ENCODE measurements at regions of chr11 and their contacts with region 1.

Region 1: GRCh38 chr11:14907411-14908213 is 15.6 kb upstream of the CYP2R1 start:
- DNase-seq: peak; percentile 74 to 80
- H3K4me3 ChIP-seq: no peak overlapping the region
- H3K4me3 Mint-ChIP-seq: peak overlapping the region; percentile 67
- H3K27ac Mint-ChIP-seq: no peak overlapping the region
- H3K4me1 ChIP-seq: peaks cover 6% of the 10 kb centered on the region; the same call in 1 of the 2 replicates
- H3K4me1 Mint-ChIP-seq: peaks cover 12% of the 10 kb centered on the region
- H3K27me3 ChIP-seq: no peaks in the 10 kb centered on the region
- H3K27me3 Mint-ChIP-seq: no peaks in the 10 kb centered on the region
- CTCF ChIP-seq: peak; percentile 68 to 79

Region 2: DNA sequence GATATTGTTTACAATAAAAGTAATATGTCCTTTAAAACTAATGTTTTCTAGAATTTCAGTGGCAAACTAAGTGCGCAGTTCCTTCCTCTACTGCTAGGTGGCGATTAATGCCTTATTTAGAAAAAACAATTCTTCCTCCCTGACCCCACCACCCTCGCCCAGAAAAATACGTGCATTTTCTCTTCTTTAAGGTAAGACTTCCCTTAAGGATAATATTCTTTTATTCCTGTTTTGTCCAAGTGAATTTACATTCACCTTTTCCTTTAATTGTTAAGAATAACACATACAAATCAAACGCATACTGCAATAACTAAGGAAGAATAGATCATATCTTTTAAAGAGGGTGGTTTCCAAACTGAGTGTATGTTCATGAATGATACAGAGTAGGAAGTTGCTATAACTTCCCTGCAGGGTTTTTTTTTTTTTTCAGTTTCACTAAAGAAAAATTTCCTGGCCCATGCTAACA is 370.4 kb before region 1 on chr11:
- CTCF ChIA-PET with region 1: no interaction called
- POLR2A ChIA-PET with region 1: interaction called, 3 read pairs
- intact Hi-C with region 1: loop called (anchors 1 kb)
- DNase-seq: peak in 1 of 2 experiments; percentile 47
- H3K4me3 ChIP-seq: no peak overlapping the region
- H3K4me3 Mint-ChIP-seq: no peak overlapping the region
- H3K27ac Mint-ChIP-seq: no peak overlapping the region
- H3K4me1 ChIP-seq: no peaks in the 10 kb centered on the region
- H3K4me1 Mint-ChIP-seq: no peaks in the 10 kb centered on the region
- H3K27me3 ChIP-seq: no peaks in the 10 kb centered on the region
- H3K27me3 Mint-ChIP-seq: no peaks in the 10 kb centered on the region
- CTCF ChIP-seq: peak; percentile 66 to 79

Region 3: DNA sequence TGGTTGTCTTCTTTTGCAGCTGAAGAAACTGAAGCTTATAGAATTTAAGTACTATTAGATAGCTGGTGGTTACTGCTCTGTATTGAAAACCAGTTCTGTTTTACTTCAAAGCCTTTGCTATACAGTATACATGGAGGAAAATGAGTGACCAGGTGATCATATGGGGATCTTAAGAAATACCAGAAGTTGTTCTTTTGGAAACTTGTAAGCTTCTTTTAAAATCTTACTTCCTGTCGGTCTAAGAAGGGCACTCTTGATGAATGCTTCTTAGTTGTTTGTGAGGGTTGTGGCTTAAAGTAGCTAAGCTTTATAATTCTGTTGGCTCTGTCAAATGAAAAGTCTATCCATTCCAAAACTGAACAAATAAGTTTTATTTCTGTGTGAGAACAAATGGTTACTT is 208.8 kb before region 1 on chr11:
- CTCF ChIA-PET with region 1: no interaction called
- POLR2A ChIA-PET with region 1: no interaction called
- intact Hi-C with region 1: no loop called
- DNase-seq: no peak
- H3K4me3 ChIP-seq: no peak overlapping the region
- H3K4me3 Mint-ChIP-seq: no peak overlapping the region
- H3K27ac Mint-ChIP-seq: no peak overlapping the region
- H3K4me1 ChIP-seq: no peaks in the 10 kb centered on the region
- H3K4me1 Mint-ChIP-seq: no peaks in the 10 kb centered on the region
- H3K27me3 ChIP-seq: no peaks in the 10 kb centered on the region
- H3K27me3 Mint-ChIP-seq: no peaks in the 10 kb centered on the region
- CTCF ChIP-seq: no peak

Region 4: DNA sequence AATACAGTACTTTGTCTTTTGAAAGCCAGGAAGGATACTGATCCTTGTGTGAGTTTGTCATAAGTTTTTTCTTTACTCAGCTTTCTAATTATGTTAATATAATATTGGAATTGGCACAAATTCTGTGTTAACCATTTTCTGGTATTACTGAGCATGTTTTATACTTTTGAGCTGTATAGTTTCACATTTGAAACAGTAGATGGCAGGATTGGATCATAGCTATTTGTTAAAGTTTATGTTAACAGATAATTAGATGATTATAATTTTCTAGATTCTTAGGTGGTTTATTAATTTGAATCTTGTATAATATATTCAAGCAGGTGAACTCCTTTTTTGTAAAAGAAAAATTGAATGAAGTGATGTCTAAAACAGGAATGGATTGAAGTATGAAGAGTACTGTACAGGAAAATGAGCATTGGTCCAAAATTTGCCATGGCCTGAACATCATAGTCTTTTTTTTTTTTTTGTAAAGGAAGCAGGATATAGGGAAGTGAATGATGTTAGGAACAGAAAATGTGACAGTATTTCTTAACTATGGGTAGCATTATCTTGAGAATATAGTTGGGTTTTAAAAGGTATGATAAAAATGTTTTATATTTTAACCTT is 117.6 kb before region 1 on chr11:
- CTCF ChIA-PET with region 1: interaction called, 156 read pairs
- POLR2A ChIA-PET with region 1: no interaction called
- intact Hi-C with region 1: loop called (anchors 1 kb)
- DNase-seq: peak in 1 of 2 experiments; percentile 4
- H3K4me3 ChIP-seq: no peak overlapping the region
- H3K4me3 Mint-ChIP-seq: no peak overlapping the region
- H3K27ac Mint-ChIP-seq: no peak overlapping the region
- H3K4me1 ChIP-seq: no peaks in the 10 kb centered on the region
- H3K4me1 Mint-ChIP-seq: peaks cover 7% of the 10 kb centered on the region
- H3K27me3 ChIP-seq: no peaks in the 10 kb centered on the region
- H3K27me3 Mint-ChIP-seq: no peaks in the 10 kb centered on the region
- CTCF ChIP-seq: peak in 1 of 2 experiments; percentile 29

Region 5: GRCh38 chr11:14974515-14975251 is 67.1 kb after region 1 on chr11:
- CTCF ChIA-PET with region 1: interaction called, 20 read pairs
- POLR2A ChIA-PET with region 1: no interaction called
- intact Hi-C with region 1: loop called (anchors 2 kb)
- DNase-seq: peak; percentile 58 to 65
- H3K4me3 ChIP-seq: no peak overlapping the region
- H3K4me3 Mint-ChIP-seq: peak overlapping the region; percentile 62
- H3K27ac Mint-ChIP-seq: no peak overlapping the region
- H3K4me1 ChIP-seq: no peaks in the 10 kb centered on the region
- H3K4me1 Mint-ChIP-seq: no peaks in the 10 kb centered on the region
- H3K27me3 ChIP-seq: peaks cover 1% of the 10 kb centered on the region
- H3K27me3 Mint-ChIP-seq: peaks cover 22% of the 10 kb centered on the region
- CTCF ChIP-seq: peak; percentile 67 to 77

Region 6: DNA sequence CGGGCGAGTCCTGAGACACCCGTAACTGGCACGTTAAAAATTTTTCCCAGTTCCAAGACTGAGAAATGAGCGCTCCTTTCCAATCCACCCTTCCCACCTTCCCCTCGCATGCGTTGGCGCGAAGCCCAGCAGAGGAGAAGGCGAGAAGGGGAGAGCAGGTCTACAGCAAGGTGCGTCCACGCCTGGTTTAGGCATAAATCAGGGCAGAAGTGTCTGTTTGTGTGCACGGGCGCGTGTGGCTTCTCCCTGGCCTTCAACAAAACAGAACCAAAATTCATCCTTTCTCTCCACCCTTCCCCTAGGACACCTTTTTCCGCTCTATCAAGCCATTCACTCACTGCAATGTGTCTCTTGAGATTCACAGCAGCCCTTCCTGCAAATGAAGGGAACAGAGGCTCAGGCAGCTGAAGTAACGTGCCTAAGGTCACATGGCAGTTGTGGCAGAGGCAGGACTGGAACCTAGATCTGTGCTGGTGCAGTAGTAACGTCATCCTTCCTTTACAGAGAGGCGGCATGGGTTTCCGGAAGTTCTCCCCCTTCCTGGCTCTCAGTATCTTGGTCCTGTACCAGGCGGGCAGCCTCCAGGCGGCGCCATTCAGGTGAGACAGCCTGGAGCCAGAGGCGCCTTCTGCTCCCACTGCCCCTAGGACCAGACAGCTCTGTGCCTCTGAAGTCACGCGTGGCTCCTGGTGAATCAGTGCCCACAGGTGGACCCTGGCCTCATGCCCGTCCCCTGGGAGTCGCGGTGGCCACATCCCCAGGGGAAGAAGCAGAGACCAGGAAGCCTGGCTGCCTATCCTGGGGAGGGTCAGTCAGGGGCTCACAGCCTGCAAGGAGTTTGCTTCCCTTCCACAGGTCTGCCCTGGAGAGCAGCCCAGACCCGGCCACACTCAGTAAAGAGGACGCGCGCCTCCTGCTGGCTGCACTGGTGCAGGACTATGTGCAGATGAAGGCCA is 166.9 kb after region 1 on chr11:
- CTCF ChIA-PET with region 1: interaction called, 56 read pairs
- POLR2A ChIA-PET with region 1: no interaction called
- intact Hi-C with region 1: loop called (anchors 1 kb)
- DNase-seq: peak; percentile 83 to 86
- H3K4me3 ChIP-seq: no peak overlapping the region
- H3K4me3 Mint-ChIP-seq: peak overlapping the region; percentile 67
- H3K27ac Mint-ChIP-seq: no peak overlapping the region
- H3K4me1 ChIP-seq: no peaks in the 10 kb centered on the region
- H3K4me1 Mint-ChIP-seq: no peaks in the 10 kb centered on the region
- H3K27me3 ChIP-seq: peaks cover 1% of the 10 kb centered on the region; the same call in 1 of the 2 replicates
- H3K27me3 Mint-ChIP-seq: peaks cover 15% of the 10 kb centered on the region
- CTCF ChIP-seq: peak; percentile 82 to 86

Region 7: DNA sequence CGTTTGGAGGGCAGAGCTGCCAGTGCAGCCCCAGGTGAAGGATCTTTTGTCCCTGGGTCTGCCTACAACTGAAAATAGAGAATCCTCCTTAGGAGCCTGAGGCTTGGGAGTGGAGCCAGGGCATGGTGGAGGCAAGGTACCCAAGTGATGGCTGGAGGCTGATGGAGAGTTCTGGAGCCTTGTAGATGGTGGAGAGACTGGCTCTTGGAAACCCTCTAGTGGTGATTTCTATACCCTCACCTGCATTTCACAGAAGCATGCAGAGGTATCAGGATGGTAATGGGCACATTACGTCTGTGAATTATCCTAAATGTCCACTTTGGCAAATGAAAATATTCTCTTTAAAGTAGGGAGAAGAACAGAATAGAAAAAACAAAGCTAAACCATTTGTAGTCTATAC is 251.5 kb after region 1 on chr11:
- CTCF ChIA-PET with region 1: no interaction called
- POLR2A ChIA-PET with region 1: no interaction called
- intact Hi-C with region 1: loop called (anchors 1 kb)
- DNase-seq: peak in 1 of 2 experiments; percentile 21
- H3K4me3 ChIP-seq: no peak overlapping the region
- H3K4me3 Mint-ChIP-seq: no peak overlapping the region
- H3K27ac Mint-ChIP-seq: no peak overlapping the region
- H3K4me1 ChIP-seq: no peaks in the 10 kb centered on the region
- H3K4me1 Mint-ChIP-seq: peaks cover 7% of the 10 kb centered on the region
- H3K27me3 ChIP-seq: no peaks in the 10 kb centered on the region
- H3K27me3 Mint-ChIP-seq: peaks cover 8% of the 10 kb centered on the region
- CTCF ChIP-seq: peak; percentile 49 to 52

Region 8: DNA sequence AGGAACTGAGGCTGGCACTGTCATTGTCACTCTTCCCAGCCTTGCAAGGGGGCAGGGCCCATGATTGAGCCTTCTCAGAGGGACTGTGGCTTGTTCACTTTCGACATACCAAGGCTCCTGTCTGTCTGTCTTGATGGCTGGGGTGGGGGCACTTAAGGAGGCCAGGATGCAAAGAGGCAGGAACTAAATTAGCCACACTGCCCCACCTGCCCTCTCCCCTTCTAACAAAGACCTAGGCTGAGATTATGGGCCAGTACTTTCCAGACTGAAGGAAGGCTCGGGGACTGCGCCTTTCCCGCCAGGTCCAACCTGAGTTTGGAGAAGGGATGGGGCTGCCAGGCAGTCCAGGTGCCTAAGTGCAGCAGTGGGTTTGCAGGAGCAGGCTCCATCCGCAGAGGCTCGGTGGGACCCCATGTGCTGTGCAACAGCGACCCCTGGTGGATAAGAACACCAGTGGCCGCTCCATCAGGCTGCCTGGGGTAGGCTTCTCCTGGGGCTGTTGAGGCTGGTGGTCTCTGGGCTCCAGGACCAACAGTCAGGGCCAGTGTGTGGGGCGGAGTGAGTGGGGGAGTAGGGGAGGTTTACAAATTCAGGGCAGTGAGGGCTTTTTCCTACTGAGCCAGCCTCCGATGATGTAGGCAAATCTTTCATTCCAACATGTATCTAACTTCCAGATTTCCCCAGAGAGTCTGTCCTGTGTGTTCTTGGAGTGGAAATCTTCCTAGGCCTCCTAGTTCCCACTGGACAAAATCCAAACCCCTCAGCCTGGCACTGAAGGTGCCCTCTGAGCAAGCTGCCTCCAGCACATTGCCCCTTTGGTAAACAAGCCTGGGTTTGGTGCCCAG is 301.0 kb after region 1 on chr11:
- CTCF ChIA-PET with region 1: interaction called, 7 read pairs
- POLR2A ChIA-PET with region 1: no interaction called
- intact Hi-C with region 1: loop called (anchors 1 kb)
- DNase-seq: peak; percentile 71 to 87
- H3K4me3 ChIP-seq: no peak overlapping the region
- H3K4me3 Mint-ChIP-seq: no peak overlapping the region
- H3K27ac Mint-ChIP-seq: no peak overlapping the region
- H3K4me1 ChIP-seq: no peaks in the 10 kb centered on the region
- H3K4me1 Mint-ChIP-seq: peaks cover 3% of the 10 kb centered on the region
- H3K27me3 ChIP-seq: no peaks in the 10 kb centered on the region
- H3K27me3 Mint-ChIP-seq: peaks cover 7% of the 10 kb centered on the region
- CTCF ChIP-seq: peak; percentile 92 to 96

Region 9: DNA sequence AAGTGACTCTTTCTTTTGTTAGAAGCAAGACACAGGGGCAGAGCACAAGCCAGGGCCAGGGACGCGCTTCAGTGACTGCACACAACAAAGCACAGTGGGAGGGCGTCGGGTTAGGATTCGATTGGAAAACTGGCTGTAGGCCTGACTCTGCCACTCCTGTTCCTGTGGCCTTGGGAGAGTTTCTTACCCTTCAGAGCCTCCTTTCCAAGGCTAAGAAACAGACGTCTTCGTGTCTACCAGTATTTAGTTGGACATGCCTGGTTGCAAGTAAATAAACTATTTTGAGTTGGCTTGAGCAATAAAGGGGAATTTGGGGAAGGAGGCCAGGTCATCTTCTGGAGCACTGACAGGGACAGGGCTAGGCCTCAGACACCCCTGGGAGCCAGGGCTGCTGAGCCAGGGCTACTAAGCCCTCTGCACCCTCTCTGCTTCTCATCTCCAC is 756.2 kb after region 1 on chr11:
- CTCF ChIA-PET with region 1: no interaction called
- POLR2A ChIA-PET with region 1: no interaction called
- intact Hi-C with region 1: no loop called
- DNase-seq: no peak
- H3K4me3 ChIP-seq: no peak overlapping the region
- H3K4me3 Mint-ChIP-seq: no peak overlapping the region
- H3K27ac Mint-ChIP-seq: peak overlapping the region; percentile 71
- H3K4me1 ChIP-seq: peaks cover 35% of the 10 kb centered on the region
- H3K4me1 Mint-ChIP-seq: peaks cover 39% of the 10 kb centered on the region
- H3K27me3 ChIP-seq: no peaks in the 10 kb centered on the region
- H3K27me3 Mint-ChIP-seq: no peaks in the 10 kb centered on the region
- CTCF ChIP-seq: no peak